ENCODE measurements at regions of chr19 and their contacts with region 1.

Region 1: DNA sequence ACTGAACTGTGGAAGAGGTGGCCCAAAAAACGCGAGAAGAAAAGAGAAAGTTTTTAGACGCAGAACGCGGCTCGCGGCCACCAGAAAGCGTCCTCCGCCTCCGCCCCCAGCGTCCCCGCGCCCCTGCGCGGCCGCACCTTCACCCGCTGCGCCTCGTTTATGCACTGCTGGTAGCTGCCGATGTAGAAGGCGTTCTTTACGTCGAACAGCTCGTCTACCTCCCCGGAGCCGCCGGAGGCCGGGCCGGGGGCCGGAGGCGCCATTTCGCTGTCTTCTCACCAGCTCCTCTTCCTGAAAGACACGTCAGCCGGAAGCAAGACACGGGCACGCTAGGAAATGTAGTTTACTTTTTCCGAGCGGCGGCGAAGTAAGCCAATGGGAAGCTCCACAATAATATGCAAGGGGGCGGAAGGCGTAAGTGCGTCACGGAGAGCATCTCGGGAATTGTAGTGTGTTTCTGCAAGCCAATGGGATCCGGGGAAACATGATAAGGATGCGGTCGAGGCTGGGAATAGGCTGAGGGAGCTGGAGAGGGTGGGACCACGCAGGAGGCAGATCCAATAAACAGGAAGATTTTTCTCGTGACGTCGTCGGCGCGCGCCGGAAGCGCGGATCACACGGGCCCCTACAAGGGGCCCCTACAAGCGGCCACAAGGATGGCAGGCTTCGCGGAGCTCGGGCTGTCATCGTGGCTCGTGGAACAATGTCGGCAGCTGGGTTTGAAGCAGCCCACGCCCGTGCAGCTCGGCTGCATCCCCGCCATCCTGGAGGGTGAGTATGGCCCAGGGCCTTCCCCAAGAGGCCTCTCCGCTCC is at the starts of genes COPE and DDX49:
- DNase-seq: peak; percentile 99
- H3K4me3 Mint-ChIP-seq: peak within 1 kb of the TSS; percentile 94
- H3K27ac Mint-ChIP-seq: peak within 1 kb of the TSS; percentile 88
- H3K4me1 Mint-ChIP-seq: peaks cover 46% of the 10 kb centered on the region
- H3K27me3 Mint-ChIP-seq: no peaks in the 10 kb centered on the region
- total RNA-seq, gene COPE: 199 to 200 TPM
- total RNA-seq, gene DDX49: 48.3 to 50.1 TPM

Region 2: DNA sequence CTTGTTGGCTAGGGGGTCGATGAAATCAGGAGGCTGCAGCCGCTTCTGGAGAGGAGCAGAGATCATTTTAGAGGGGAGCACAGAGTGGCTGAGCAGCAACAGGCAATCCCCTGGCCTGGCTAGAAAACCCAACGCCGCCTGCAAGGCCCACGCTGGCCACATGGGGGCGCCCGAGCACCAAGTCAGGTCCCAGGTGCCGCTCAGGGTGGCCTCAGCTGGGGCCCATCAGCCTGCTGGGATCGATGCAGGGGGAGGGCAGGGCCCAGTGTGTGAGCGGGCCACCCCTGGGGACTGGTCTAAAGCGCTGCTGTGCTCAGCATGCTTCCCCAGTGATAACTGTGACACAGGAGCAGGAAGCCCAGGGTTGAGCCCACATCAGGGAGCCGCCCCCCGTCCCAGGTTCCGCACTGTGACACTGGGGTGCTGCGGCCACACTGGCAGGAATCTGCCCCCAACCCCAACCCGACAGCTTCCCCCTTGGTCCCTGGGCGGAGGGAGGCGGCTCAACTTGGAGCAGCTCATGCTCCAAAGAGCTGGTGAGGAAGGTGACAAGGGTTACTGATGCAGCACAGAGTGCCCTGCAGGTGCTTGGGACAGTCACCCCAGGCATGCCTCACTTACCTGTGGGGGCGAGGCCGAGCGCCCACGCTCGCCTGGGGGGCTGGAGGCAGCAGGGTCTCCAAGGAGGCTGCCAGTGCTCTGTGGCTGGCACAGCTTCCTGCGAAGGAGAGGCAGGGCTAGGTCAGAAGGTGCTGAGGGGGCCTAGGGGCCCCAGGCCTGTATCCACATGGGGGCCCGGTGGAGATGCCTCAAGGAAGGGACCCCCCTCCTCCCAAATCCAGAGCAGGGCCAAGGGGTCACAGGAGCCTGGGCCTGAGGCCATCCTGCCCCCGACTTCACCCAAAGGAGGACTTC is 468.1 kb before region 1 on chr19:
- CTCF ChIA-PET with region 1: no interaction called
- intact Hi-C with region 1: loop called (anchors 2 kb)
- DNase-seq: peak; percentile 93
- H3K4me3 Mint-ChIP-seq: no peak overlapping the region
- H3K27ac Mint-ChIP-seq: no peak overlapping the region
- H3K4me1 Mint-ChIP-seq: no peaks in the 10 kb centered on the region
- H3K27me3 Mint-ChIP-seq: no peaks in the 10 kb centered on the region

Region 3: DNA sequence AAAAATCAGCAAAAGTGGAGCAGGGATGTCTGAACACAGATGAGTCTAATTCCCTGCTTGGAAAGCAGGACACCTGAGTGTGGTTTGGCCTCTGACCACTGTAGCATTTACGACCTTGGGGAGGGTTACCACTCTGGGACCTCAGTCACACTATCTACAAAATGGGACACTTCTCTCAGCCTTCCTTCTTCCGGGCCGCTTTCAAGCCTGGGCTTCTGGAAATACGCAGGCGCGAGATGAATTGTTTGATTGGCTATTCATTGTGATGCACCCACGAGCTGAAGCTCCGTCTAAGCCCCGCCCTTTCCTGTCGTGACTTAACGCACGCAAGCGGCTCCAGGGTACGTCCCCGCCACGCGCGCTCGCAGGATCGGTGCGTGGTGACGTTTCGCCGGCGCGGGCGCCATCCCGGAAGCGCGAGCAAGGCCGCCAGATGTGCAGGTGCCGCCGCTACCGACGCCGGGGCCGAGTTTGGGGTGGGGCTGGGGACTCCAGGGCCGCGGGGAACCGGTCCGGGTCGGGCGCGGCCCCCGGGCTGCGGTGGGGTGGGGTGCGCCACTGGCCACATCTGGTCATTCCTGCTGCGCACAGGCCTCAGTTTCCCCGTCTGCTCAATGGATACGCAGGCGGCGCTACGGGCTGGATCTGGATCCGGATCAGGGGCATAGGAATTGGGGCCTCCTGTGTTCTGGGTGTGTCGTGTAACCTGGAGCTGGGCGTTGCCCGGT is 361.7 kb before region 1 on chr19 and contains the start of gene KXD1:
- CTCF ChIA-PET with region 1: no interaction called
- intact Hi-C with region 1: loop called (anchors 1 kb)
- DNase-seq: peak; percentile 99
- H3K4me3 Mint-ChIP-seq: peak within 1 kb of the TSS; percentile 93
- H3K27ac Mint-ChIP-seq: peak within 1 kb of the TSS; percentile 92
- H3K4me1 Mint-ChIP-seq: peaks cover 24% of the 10 kb centered on the region
- H3K27me3 Mint-ChIP-seq: no peaks in the 10 kb centered on the region
- total RNA-seq, gene KXD1: 86.7 TPM

Region 4: DNA sequence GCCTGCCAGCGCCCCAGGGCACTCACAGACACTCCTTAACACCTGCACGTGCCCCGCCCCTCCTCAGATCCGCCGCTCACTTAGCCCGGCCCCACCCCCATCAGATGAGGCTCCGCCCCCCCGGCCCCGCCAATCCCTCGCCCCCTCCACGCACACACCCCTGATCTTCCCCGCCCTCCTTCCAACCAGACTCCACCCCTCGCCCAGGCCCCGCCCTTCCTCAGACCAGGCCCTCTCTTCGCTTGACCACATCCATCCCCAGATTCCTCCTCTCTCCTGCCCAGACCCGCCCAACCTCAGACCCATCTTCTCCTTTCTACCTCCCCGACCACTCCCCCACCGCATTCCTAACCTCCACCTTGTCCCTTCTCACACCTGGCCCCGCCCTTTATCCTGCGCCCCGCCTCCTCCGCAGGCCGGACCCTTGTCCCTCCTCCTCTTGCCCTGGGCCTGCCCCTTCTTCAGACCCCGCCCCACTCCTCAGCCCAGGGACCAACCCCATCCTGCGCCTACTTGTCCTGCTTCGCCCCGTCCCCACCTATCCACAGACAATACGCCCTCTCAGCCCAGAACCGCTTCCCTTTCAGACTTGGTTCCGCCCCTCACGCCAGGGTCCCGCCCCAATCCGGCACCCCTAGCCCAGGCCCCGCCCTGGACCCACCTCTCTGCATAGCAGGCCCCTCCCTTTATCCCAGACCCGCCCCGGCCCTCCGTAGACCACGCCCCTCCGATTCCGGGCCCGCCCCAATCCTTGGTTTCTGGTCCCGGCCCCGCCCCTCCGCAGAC is 282.9 kb before region 1 on chr19:
- CTCF ChIA-PET with region 1: no interaction called
- intact Hi-C with region 1: loop called (anchors 1 kb)
- DNase-seq: peak; percentile 100
- H3K4me3 Mint-ChIP-seq: peak overlapping the region; percentile 81
- H3K27ac Mint-ChIP-seq: peak overlapping the region; percentile 57
- H3K4me1 Mint-ChIP-seq: peaks cover 23% of the 10 kb centered on the region
- H3K27me3 Mint-ChIP-seq: no peaks in the 10 kb centered on the region

Region 5: DNA sequence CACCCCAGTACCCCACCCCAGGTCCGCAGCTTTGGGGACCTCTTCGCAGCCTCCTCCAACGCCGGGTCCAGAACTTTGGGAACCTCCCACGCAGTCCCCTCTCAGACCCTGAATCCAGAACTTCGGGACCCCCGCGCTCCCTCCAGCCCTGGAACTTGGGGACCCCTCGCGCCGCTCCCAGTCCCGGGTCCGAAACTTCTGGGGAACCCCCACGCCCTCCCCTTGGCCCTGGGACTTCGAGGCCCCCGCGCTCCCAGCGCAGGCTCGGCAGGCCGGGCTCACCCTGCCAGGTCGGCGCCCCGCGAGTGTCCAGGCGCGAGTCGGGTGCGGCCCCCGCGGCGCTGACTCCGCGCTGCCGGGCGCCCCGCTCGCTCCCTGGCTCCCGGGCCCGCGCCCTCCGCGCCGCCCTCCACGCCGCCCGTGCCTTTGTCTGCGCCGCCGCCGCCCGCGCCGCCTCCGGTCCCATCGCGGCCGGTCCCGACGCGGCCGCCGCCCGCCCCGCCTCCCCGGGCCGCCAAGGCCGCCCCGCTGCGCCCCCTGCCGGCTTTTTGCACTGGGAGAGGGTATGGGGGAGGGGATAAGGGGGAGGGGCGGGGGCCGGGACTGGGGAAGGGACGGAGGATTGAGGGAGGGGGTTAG is 21.6 kb after region 1 on chr19 and contains the start of gene HOMER3:
- CTCF ChIA-PET with region 1: no interaction called
- intact Hi-C with region 1: loop called (anchors 1 kb)
- DNase-seq: peak; percentile 82
- H3K4me3 Mint-ChIP-seq: peak within 1 kb of the TSS; percentile 40
- H3K27ac Mint-ChIP-seq: no peak within 1 kb of the TSS
- H3K4me1 Mint-ChIP-seq: peaks cover 9% of the 10 kb centered on the region
- H3K27me3 Mint-ChIP-seq: peaks cover 26% of the 10 kb centered on the region
- total RNA-seq, gene HOMER3: not detected

Region 6: GRCh38 chr19:19138169-19138981 is 219.1 kb after region 1 on chr19 and contains the start of gene TMEM161A:
- CTCF ChIA-PET with region 1: no interaction called
- intact Hi-C with region 1: loop called (anchors 1 kb)
- DNase-seq: peak; percentile 98
- H3K4me3 Mint-ChIP-seq: peak within 1 kb of the TSS; percentile 94
- H3K27ac Mint-ChIP-seq: peak within 1 kb of the TSS; percentile 61
- H3K4me1 Mint-ChIP-seq: peaks cover 27% of the 10 kb centered on the region
- H3K27me3 Mint-ChIP-seq: no peaks in the 10 kb centered on the region
- total RNA-seq, gene TMEM161A: 18.1 to 18.3 TPM

Measured in activated naive CD4-positive, alpha-beta T cell treated with anti-CD3 and anti-CD28 coated beads for 36 hours (primary cell).